ENCODE measurements at regions of chr15 and their contacts with region 1.

Region 1: GRCh38 chr15:51443282-51443914 is 101.9 kb downstream of the GLDN start:
- DNase-seq: no peak
- ATAC-seq: no peak
- H3K4me3 ChIP-seq: no peak overlapping the region
- H3K4me3 Mint-ChIP-seq: no peak overlapping the region
- H3K27ac ChIP-seq: no peak overlapping the region
- H3K27ac Mint-ChIP-seq: no peak overlapping the region
- H3K4me1 ChIP-seq: no peaks in the 10 kb centered on the region
- H3K4me1 Mint-ChIP-seq: no peaks in the 10 kb centered on the region
- H3K27me3 ChIP-seq: no peaks in the 10 kb centered on the region
- H3K27me3 Mint-ChIP-seq: no peaks in the 10 kb centered on the region
- CTCF ChIP-seq: no peak

Region 2: GRCh38 chr15:51475736-51476135 is 32.3 kb after region 1 on chr15:
- CTCF ChIA-PET with region 1: no interaction called
- POLR2A ChIA-PET with region 1: no interaction called
- intact Hi-C with region 1: loop called in 1 of 2 experiments (anchors 1 kb)
- DNase-seq: no peak
- ATAC-seq: no peak
- H3K4me3 ChIP-seq: no peak overlapping the region
- H3K4me3 Mint-ChIP-seq: no peak overlapping the region
- H3K27ac ChIP-seq: no peak overlapping the region
- H3K27ac Mint-ChIP-seq: no peak overlapping the region
- H3K4me1 ChIP-seq: no peaks in the 10 kb centered on the region
- H3K4me1 Mint-ChIP-seq: no peaks in the 10 kb centered on the region
- H3K27me3 ChIP-seq: no peaks in the 10 kb centered on the region
- H3K27me3 Mint-ChIP-seq: no peaks in the 10 kb centered on the region
- CTCF ChIP-seq: no peak

Region 3: DNA sequence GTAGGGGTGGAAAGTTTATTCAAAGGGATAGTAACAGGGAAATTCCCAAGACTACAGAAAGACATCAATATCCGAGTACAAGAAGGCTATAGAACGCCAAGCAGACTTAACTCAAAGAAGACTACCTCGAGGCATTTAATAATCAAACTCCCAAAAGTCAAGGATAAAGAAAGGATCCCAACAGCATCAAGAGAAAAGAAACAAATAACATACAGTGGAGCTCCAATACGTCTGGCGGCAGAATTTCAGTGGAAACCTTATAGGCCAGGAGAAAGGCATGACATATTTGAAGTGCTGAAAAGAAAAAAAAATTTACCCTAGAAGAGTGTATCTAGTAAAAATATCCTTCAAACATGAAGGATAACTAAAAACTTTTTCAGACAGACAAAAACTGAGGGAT is 83.6 kb after region 1 on chr15:
- CTCF ChIA-PET with region 1: no interaction called
- POLR2A ChIA-PET with region 1: no interaction called
- intact Hi-C with region 1: no loop called
- DNase-seq: no peak
- ATAC-seq: no peak
- H3K4me3 ChIP-seq: no peak overlapping the region
- H3K4me3 Mint-ChIP-seq: no peak overlapping the region
- H3K27ac ChIP-seq: no peak overlapping the region
- H3K27ac Mint-ChIP-seq: no peak overlapping the region
- H3K4me1 ChIP-seq: no peaks in the 10 kb centered on the region
- H3K4me1 Mint-ChIP-seq: no peaks in the 10 kb centered on the region
- H3K27me3 ChIP-seq: no peaks in the 10 kb centered on the region
- H3K27me3 Mint-ChIP-seq: no peaks in the 10 kb centered on the region
- CTCF ChIP-seq: no peak

Region 4: DNA sequence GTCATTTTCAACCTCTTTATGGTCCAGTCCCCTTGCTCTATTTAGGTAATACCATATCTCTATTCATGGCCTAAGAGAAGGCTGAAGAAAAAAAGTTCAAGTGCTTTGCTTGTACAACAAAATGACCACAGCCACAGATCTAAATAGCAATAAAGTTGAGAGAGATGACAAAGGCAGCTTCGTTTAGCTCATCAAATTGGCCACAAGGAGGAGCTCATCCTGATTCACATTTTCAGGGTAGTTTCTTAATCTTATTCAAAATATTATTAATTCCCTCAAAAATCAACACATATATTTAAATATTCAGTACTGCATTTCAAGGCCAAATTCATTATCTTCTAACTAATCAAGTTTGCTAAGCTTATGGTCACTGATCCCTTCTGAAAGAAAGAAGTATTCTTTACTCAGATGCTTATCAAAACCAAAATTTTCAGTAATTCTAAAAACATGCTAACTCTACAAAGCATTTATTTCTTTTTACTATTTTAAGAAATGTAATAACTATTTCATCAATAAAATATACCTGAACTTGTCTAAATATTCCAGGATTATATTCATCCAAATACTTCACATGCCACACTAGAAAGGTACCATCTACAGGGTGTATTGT is 93.7 kb after region 1 on chr15:
- CTCF ChIA-PET with region 1: no interaction called
- POLR2A ChIA-PET with region 1: no interaction called
- intact Hi-C with region 1: no loop called
- DNase-seq: no peak
- ATAC-seq: no peak
- H3K4me3 ChIP-seq: no peak overlapping the region
- H3K4me3 Mint-ChIP-seq: no peak overlapping the region
- H3K27ac ChIP-seq: no peak overlapping the region
- H3K27ac Mint-ChIP-seq: no peak overlapping the region
- H3K4me1 ChIP-seq: no peaks in the 10 kb centered on the region
- H3K4me1 Mint-ChIP-seq: no peaks in the 10 kb centered on the region
- H3K27me3 ChIP-seq: no peaks in the 10 kb centered on the region
- H3K27me3 Mint-ChIP-seq: no peaks in the 10 kb centered on the region
- CTCF ChIP-seq: no peak

Measured in CD8-positive, alpha-beta T cell (primary cell).